K562 (cell line): ENCODE measurements at regions of chr1 and their contacts with region 1.

Region 1: DNA sequence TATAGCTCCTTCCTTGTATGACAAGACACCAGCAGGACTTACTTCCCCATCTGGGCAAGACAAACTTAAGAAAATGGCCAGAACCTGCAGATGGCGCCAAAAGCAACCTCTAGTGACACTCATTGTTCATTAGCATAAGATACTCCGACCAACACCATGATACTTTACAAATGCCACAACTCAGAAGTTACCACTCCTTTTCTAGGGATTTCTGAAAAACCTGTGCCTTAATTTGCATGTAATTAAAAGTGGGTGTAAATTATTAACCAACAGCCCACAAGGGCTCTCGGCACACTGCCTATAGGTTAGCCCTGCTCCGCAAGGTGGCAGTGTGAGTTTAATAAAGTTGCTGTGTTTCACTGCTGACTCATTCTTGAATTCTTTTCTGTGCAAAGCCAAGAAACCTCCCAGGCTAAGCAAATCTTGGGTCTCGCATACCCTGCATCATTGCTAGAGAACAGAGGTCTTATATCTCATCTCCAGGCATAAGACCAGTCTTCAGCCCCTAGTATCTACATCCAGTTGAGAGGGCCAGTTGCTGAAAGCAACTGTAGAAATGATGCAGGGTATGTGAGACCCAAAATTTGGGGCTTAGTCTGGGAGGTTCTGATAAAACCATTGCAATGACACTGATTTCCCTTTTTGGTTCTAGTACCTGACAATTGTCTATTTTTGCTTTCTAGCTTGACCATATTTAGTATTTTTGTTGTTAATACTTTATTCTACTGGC is 86.4 kb downstream of the FAF1 start:
- DNase-seq: peak; percentile 51 to 91 (median 62)
- ATAC-seq: peak; percentile 96
- H3K4me3 ChIP-seq: peak overlapping the region; percentile 37
- H3K27ac ChIP-seq: peak overlapping the region; percentile 67
- H3K4me1 ChIP-seq: peaks cover 0 to 3% of the 10 kb centered on the region in 2 experiments; a peak in 2 of 5 replicates
- H3K27me3 ChIP-seq: no peaks in the 10 kb centered on the region
- CTCF ChIP-seq: peak; percentile 93 to 98 (median 97)
- EP300 ChIP-seq: peak; percentile 45; the same call in 1 of the 2 replicates
- POLR2A ChIP-seq: no peak
- RAD21 ChIP-seq: peak; percentile 87 to 88

Region 2: GRCh38 chr1:50832167-50832566 is 41.5 kb before region 1 on chr1:
- CTCF ChIA-PET with region 1: no interaction called
- POLR2A ChIA-PET with region 1: no interaction called
- in situ Hi-C with region 1: no loop called
- intact Hi-C with region 1: no loop called
- DNase-seq: no peak
- ATAC-seq: no peak
- H3K4me3 ChIP-seq: no peak overlapping the region
- H3K27ac ChIP-seq: no peak overlapping the region
- H3K4me1 ChIP-seq: no peaks in the 10 kb centered on the region
- H3K27me3 ChIP-seq: no peaks in the 10 kb centered on the region
- CTCF ChIP-seq: no peak
- EP300 ChIP-seq: no peak
- POLR2A ChIP-seq: no peak
- RAD21 ChIP-seq: no peak

Region 3: DNA sequence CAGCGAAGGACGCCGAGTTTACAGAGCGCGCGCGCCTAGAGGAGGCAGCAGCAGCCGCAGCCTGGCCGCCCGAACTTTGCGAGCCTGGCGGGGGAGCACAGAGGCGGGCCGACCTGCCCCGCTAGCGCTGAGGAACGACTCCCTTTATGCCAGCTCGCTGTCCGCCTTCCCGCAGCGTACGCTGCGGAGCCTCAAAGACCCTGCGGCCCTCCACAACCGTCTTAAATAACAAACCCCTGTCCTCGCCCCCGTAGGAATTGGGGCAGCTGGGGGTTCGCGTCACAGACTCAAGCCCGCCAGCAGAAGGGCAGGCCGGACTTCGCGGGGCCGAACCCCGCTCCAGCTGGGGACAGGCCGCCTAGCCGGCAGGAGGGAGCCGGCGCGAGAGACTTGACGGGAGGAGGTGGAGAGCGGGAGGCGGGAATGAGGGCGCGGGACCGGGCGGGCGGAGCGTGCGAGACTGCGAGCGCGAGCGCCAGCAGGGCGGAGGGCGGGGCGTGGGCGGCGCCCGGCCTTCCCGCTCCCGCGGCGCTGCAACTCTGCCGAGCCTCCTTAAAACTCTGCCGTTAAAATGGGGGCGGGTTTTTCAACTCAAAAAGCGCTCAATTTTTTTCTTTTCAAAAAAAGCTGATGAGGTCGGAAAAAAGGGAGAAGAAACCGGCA is 94.7 kb after region 1 on chr1:
- CTCF ChIA-PET with region 1: interaction called, 3 read pairs
- POLR2A ChIA-PET with region 1: interaction called, 3 read pairs
- in situ Hi-C with region 1: no loop called
- intact Hi-C with region 1: loop called (anchors 2 kb)
- DNase-seq: peak; percentile 93 to 97 (median 96)
- ATAC-seq: peak; percentile 75
- H3K4me3 ChIP-seq: peak overlapping the region; percentile 78
- H3K27ac ChIP-seq: peak overlapping the region; percentile 92
- H3K4me1 ChIP-seq: peaks cover 3 to 15% of the 10 kb centered on the region in 2 experiments; a peak in 3 of 5 replicates
- H3K27me3 ChIP-seq: no peaks in the 10 kb centered on the region
- CTCF ChIP-seq: peak; percentile 42 to 67 (median 59); a peak in 4 of 6 replicates
- EP300 ChIP-seq: peak; percentile 55
- POLR2A ChIP-seq: peak; percentile 89
- RAD21 ChIP-seq: peak; percentile 40 to 50; a peak in 3 of 4 replicates

Region 4: DNA sequence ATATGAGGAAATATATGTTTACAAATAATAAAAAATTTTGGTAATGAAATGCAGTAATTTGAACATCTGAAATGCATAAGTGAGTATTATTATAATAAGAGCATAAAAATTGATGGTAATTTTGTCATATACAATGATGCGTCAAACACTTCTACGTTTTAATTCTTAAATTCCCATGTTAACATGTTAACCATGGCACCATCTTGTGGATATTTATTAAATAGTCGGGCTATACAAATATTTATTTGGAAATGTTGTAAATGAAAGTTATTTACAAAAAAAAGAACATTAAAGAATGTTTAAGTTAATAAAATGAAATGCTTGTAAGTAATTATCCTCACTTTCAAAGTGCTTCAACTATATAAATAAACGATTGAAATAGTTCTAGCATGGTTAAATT is 171.2 kb after region 1 on chr1:
- CTCF ChIA-PET with region 1: interaction called, 16 read pairs
- POLR2A ChIA-PET with region 1: no interaction called
- in situ Hi-C with region 1: no loop called
- intact Hi-C with region 1: loop called (anchors 1 kb)
- DNase-seq: peak in 2 of 4 experiments; percentile 17 to 21
- ATAC-seq: peak; percentile 65; the same call in 2 of the 3 replicates
- H3K4me3 ChIP-seq: no peak overlapping the region
- H3K27ac ChIP-seq: no peak overlapping the region
- H3K4me1 ChIP-seq: no peaks in the 10 kb centered on the region
- H3K27me3 ChIP-seq: no peaks in the 10 kb centered on the region
- CTCF ChIP-seq: peak; percentile 10 to 76 (median 26); a peak in 3 of 6 replicates
- EP300 ChIP-seq: no peak
- POLR2A ChIP-seq: no peak
- RAD21 ChIP-seq: peak; percentile 71 to 76

Region 5: DNA sequence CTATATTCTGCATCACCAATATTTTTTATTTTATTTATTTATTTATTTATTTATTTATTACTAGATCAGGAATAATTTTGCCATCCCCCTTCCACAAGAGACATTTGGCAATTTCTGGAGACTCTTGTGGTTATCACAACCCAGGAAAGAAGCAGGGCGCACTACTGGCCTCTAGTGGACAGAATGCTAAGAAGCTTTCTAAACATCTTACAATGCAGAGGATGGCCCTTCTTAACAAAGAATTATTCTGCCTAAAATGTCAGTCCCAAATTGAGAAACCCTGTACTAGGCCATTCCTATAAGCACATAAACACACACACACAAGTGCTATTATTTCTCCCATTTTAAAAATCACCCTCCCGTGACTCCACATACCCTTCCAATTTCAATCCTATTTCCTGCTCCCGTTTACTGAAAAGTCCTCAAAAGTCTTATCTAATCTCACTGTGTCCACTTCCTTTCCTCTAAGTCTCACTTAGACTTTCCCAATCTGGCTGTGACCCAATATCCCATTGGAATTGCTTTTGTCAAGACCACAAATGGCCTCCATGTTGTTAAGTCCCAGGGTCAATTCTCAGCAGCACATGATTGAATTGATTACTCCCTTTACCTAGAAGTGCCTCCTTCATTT is 318.7 kb after region 1 on chr1:
- CTCF ChIA-PET with region 1: interaction called, 58 read pairs
- POLR2A ChIA-PET with region 1: no interaction called
- in situ Hi-C with region 1: no loop called
- intact Hi-C with region 1: loop called (anchors 1 kb)
- DNase-seq: peak; percentile 65 to 86 (median 70)
- ATAC-seq: peak; percentile 90
- H3K4me3 ChIP-seq: no peak overlapping the region
- H3K27ac ChIP-seq: no peak overlapping the region
- H3K4me1 ChIP-seq: peaks cover 0 to 3% of the 10 kb centered on the region in 2 experiments; a peak in 1 of 5 replicates
- H3K27me3 ChIP-seq: no peaks in the 10 kb centered on the region
- CTCF ChIP-seq: peak; percentile 79 to 91 (median 81)
- EP300 ChIP-seq: no peak
- POLR2A ChIP-seq: no peak
- RAD21 ChIP-seq: peak; percentile 72 to 82

Region 6: DNA sequence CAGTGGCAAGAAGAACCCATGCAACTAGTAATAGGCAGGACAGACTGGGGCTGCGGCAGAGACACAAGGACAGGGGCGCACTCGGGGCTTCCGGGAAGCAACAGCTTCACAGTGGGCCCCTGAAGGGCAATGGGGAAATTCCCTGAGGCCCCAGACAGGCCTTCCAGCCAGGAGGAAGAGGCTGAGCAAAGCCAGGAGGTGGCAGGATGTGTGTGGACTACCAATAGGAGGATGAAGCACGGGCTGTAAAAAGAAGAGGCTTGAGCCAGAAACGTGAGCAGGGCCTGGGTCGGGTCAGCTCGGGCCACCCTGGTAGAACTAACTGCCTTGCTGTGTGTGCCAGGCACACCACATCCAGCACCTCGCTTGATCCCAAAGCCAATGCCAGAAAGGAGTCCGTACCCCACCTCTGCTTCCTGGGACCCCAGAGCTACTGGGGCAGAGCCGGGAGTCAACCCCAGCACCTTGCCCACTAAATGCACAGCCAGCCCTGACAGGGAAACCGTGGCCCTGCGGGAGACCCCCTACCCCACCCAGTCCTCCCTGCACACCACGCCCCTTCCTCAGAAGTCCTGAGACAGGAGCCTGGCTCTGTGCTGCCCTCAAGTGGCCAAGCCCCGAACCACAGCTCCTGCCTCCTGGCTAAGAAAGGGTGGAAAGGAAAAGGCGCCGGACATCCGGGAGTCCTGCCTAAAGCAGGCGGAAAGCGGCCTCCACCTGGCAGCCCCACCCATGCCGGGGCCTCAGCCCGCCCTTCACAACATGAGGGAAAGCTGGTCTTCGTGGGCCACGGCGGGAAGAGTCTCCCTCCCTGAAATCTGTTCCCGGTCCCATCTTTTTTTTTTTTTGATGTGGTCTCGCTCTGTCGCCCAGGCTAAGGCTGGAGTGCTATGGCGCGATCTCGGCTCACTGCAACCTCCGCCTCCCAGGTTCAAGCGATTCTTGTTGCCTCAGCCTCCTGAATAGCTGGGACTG is 423.0 kb after region 1 on chr1:
- CTCF ChIA-PET with region 1: no interaction called
- POLR2A ChIA-PET with region 1: no interaction called
- in situ Hi-C with region 1: no loop called
- intact Hi-C with region 1: loop called (anchors 5 kb)
- DNase-seq: peak; percentile 90 to 94 (median 91)
- ATAC-seq: peak; percentile 92
- H3K4me3 ChIP-seq: no peak overlapping the region
- H3K27ac ChIP-seq: no peak overlapping the region; the same call in 2 of the 3 replicates
- H3K4me1 ChIP-seq: peaks cover 12 to 44% of the 10 kb centered on the region in 2 experiments; a peak in 4 of 5 replicates
- H3K27me3 ChIP-seq: no peaks in the 10 kb centered on the region
- CTCF ChIP-seq: peak; percentile 94 to 99 (median 96)
- EP300 ChIP-seq: no peak
- POLR2A ChIP-seq: no peak
- RAD21 ChIP-seq: peak; percentile 90 to 94